WTC11 (cell line): ENCODE measurements at regions of chr9 and their contacts with region 1.

Region 1: GRCh38 chr9:124839612-124840299 is 13.5 kb upstream of the WDR38 start:
- DNase-seq: peak; percentile 74
- ATAC-seq: peak; percentile 90
- H3K4me3 Mint-ChIP-seq: no peak overlapping the region
- H3K27ac Mint-ChIP-seq: peak overlapping the region; percentile 51
- H3K4me1 Mint-ChIP-seq: peaks cover 3% of the 10 kb centered on the region; the same call in 1 of the 2 replicates
- H3K27me3 Mint-ChIP-seq: no peaks in the 10 kb centered on the region
- CTCF ChIP-seq: peak; percentile 70

Region 2: GRCh38 chr9:124764774-124765438 is 74.8 kb before region 1 on chr9:
- CTCF ChIA-PET with region 1: interaction called, 323 read pairs
- POLR2A ChIA-PET with region 1: no interaction called
- DNase-seq: no peak
- ATAC-seq: 0 out of 2 replicates have a peak, but pooled peaks have one; percentile 12
- H3K4me3 Mint-ChIP-seq: peak overlapping the region; percentile 47
- H3K27ac Mint-ChIP-seq: 0 out of 2 replicates have a peak overlapping the region, but pooled peaks have one; percentile 46
- H3K4me1 Mint-ChIP-seq: peaks cover 93% of the 10 kb centered on the region
- H3K27me3 Mint-ChIP-seq: no peaks in the 10 kb centered on the region; the same call in none of the 2 replicates
- CTCF ChIP-seq: no peak

Region 3: GRCh38 chr9:124794902-124795491 is 44.8 kb before region 1 on chr9:
- CTCF ChIA-PET with region 1: interaction called, 26 read pairs
- POLR2A ChIA-PET with region 1: interaction called, 6 read pairs
- DNase-seq: no peak
- ATAC-seq: peak; percentile 35; the same call in 1 of the 2 replicates
- H3K4me3 Mint-ChIP-seq: no peak overlapping the region
- H3K27ac Mint-ChIP-seq: no peak overlapping the region
- H3K4me1 Mint-ChIP-seq: 0 out of 2 replicates have a peak, but pooled peaks cover 4% of the 10 kb centered on the region
- H3K27me3 Mint-ChIP-seq: no peaks in the 10 kb centered on the region
- CTCF ChIP-seq: no peak

Region 4: GRCh38 chr9:124812401-124813016 is 27.2 kb before region 1 on chr9:
- CTCF ChIA-PET with region 1: interaction called, 36 read pairs
- POLR2A ChIA-PET with region 1: interaction called, 4 read pairs
- DNase-seq: no peak
- ATAC-seq: no peak
- H3K4me3 Mint-ChIP-seq: no peak overlapping the region
- H3K27ac Mint-ChIP-seq: no peak overlapping the region
- H3K4me1 Mint-ChIP-seq: peaks cover 36% of the 10 kb centered on the region
- H3K27me3 Mint-ChIP-seq: no peaks in the 10 kb centered on the region
- CTCF ChIP-seq: no peak

Region 5: GRCh38 chr9:124861342-124862229 is 21.8 kb after region 1 on chr9 and contains the starts of genes ARPC5L and RPL35:
- CTCF ChIA-PET with region 1: interaction called, 283 read pairs
- POLR2A ChIA-PET with region 1: interaction called, 3 read pairs
- DNase-seq: peak; percentile 95
- ATAC-seq: peak; percentile 89
- H3K4me3 Mint-ChIP-seq: peak within 1 kb of the TSS; percentile 91
- H3K27ac Mint-ChIP-seq: peak within 1 kb of the TSS; percentile 96
- H3K4me1 Mint-ChIP-seq: peaks cover 14% of the 10 kb centered on the region
- H3K27me3 Mint-ChIP-seq: no peaks in the 10 kb centered on the region
- CTCF ChIP-seq: no peak
- total RNA-seq, gene ARPC5L: 40.0 to 47.2 TPM (median 40.5 TPM) in 3 replicates
- total RNA-seq, gene RPL35: 1,710 to 1,958 TPM (median 1,927 TPM) in 3 replicates